ENCODE measurements at regions of chr3 and their contacts with region 1.

Region 1: DNA sequence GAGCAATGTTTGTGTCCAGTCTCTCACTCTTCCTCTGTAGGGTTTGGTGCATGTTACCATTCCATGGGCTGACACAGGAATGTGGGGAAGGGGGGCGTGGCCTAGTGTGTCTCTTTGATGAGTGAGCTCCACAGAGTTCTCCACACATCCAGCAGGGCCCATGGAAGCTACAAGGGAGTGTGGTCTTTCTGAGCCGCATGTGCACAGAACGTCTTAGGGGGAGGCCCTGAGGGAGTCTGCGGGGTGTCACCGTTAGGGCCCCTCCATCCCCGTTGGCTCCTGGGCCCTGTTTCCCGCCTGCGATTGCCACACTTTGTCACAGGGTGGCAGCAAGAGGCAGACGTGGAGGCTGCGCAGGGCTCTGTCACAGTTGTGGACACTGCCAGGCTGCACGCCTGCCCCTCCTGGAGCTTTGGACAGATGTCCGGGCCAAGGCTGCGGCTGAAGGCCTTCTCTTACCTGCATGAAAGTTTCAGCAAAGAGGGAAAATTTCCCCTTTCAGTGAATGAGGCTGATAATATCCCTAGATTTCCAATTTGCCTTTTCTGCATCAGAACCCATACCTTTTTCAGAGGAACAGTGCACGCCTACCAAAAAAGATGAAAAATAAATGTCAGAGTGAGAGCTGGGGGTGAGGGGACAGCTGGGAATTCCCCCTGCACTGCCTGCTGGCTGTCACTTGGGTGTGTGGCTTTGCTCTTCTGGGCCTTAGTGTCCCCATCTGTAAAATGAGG is 24.3 kb downstream of the CACNA2D3 start:
- DNase-seq: peak; percentile 74 to 78
- H3K4me3 ChIP-seq: no peak overlapping the region
- H3K27ac ChIP-seq: no peak overlapping the region
- H3K4me1 ChIP-seq: peaks cover 0 to 3% of the 10 kb centered on the region in 2 donors
- H3K27me3 ChIP-seq: no peaks in the 10 kb centered on the region
- CTCF ChIP-seq: peak; percentile 57 to 92 (median 85)
- POLR2A ChIP-seq: no peak

Region 2: GRCh38 chr3:54376939-54377578 is 230.4 kb after region 1 on chr3:
- intact Hi-C with region 1: loop called (anchors 5 kb)
- DNase-seq: no peak
- H3K4me3 ChIP-seq: no peak overlapping the region
- H3K27ac ChIP-seq: no peak overlapping the region
- H3K4me1 ChIP-seq: no peaks in the 10 kb centered on the region
- H3K27me3 ChIP-seq: no peaks in the 10 kb centered on the region
- CTCF ChIP-seq: no peak
- POLR2A ChIP-seq: no peak

Measured in thyroid gland (tissue), 4 donors.